A673 (cell line): ENCODE measurements at regions of chr1 and their contacts with region 1.

Region 1: GRCh38 chr1:31041529-31041928 is 24.0 kb downstream of the PUM1 start:
- DNase-seq: no peak
- H3K4me3 ChIP-seq: no peak overlapping the region
- H3K27ac ChIP-seq: no peak overlapping the region
- H3K4me1 ChIP-seq: no peaks in the 10 kb centered on the region
- H3K27me3 ChIP-seq: no peaks in the 10 kb centered on the region
- CTCF ChIP-seq: no peak

Region 2: GRCh38 chr1:31095298-31095981 is 53.9 kb after region 1 on chr1:
- CTCF ChIA-PET with region 1: no interaction called
- POLR2A ChIA-PET with region 1: interaction called, 10 read pairs
- intact Hi-C with region 1: no loop called
- DNase-seq: no peak
- H3K4me3 ChIP-seq: no peak overlapping the region
- H3K27ac ChIP-seq: no peak overlapping the region
- H3K4me1 ChIP-seq: no peaks in the 10 kb centered on the region
- H3K27me3 ChIP-seq: no peaks in the 10 kb centered on the region
- CTCF ChIP-seq: no peak